ENCODE measurements at regions of chr11 and their contacts with region 1.

Region 1: GRCh38 chr11:107770551-107770951 is 58.7 kb upstream of the SLN start:
- DNase-seq: no peak
- ATAC-seq: no peak
- H3K4me3 Mint-ChIP-seq: no peak overlapping the region
- H3K27ac Mint-ChIP-seq: no peak overlapping the region
- H3K4me1 Mint-ChIP-seq: peaks cover 3% of the 10 kb centered on the region
- H3K27me3 Mint-ChIP-seq: peaks cover 18% of the 10 kb centered on the region

Region 2: GRCh38 chr11:107741044-107741823 is 29.3 kb before region 1 on chr11:
- CTCF ChIA-PET with region 1: interaction called, 15 read pairs
- POLR2A ChIA-PET with region 1: no interaction called
- DNase-seq: peak; percentile 38
- ATAC-seq: peak; percentile 58
- H3K4me3 Mint-ChIP-seq: no peak overlapping the region
- H3K27ac Mint-ChIP-seq: no peak overlapping the region
- H3K4me1 Mint-ChIP-seq: no peaks in the 10 kb centered on the region
- H3K27me3 Mint-ChIP-seq: peaks cover 19% of the 10 kb centered on the region

Region 3: DNA sequence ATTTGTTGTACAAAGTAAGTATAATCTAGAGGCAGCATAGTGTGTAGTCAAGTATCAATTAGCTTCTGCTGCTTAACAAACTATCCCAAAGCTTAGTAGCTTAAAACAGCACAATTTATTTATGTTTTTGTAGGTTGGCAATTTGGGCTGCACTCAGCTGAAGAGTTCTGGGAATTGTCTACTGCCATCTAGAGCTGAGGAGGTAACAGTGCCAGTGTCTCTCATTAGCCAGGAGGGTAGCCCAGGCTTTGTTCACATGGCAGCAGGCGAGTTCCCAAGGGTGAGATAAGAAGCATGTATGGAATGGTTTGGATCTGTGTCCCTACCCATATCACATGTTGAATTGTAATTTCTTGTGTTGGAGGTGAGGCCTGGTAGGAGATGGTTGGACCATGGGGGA is 12.9 kb before region 1 on chr11:
- CTCF ChIA-PET with region 1: interaction called, 26 read pairs
- POLR2A ChIA-PET with region 1: no interaction called
- DNase-seq: no peak
- ATAC-seq: no peak
- H3K4me3 Mint-ChIP-seq: no peak overlapping the region
- H3K27ac Mint-ChIP-seq: no peak overlapping the region
- H3K4me1 Mint-ChIP-seq: no peaks in the 10 kb centered on the region
- H3K27me3 Mint-ChIP-seq: peaks cover 13% of the 10 kb centered on the region

Region 4: DNA sequence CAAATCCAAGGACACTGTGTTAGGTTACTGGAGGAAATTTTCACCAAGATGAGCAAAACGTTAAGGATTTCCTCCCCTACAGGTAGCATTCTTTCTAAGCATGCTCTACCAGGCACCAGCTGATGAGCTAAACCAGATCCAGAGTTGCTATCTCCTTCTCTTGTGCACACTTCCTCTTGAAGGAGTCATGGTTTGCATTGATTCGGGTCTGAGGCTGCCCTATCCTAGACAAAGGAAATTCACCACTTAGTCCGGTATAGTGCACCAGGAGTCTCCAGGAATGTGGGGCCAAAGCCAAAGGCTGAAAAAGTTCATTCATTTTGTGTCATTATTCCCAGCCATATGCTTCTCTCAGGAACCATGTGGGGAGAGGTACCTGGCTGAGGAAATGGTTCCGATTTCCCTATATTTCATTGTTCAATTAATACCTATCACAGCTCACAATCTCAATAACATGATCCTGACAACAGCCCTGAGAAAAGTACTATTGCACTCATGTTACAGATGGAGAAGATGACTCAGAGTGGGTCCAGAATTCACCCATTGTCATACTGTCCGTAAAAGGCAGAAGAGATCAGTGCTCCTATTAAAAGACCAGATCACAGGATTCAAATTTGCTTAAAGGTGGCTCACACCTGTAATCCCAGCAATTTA is 48.9 kb after region 1 on chr11:
- CTCF ChIA-PET with region 1: no interaction called
- POLR2A ChIA-PET with region 1: no interaction called
- DNase-seq: no peak
- ATAC-seq: no peak
- H3K4me3 Mint-ChIP-seq: no peak overlapping the region
- H3K27ac Mint-ChIP-seq: no peak overlapping the region
- H3K4me1 Mint-ChIP-seq: no peaks in the 10 kb centered on the region
- H3K27me3 Mint-ChIP-seq: no peaks in the 10 kb centered on the region